ENCODE measurements at regions of chr15 and their contacts with region 1.

Region 1: GRCh38 chr15:64355944-64356709 is at the start of gene CSNK1G1:
- DNase-seq: peak; percentile 88
- H3K4me3 Mint-ChIP-seq: peak within 1 kb of the TSS; percentile 95
- H3K27ac Mint-ChIP-seq: peak within 1 kb of the TSS; percentile 95
- H3K4me1 Mint-ChIP-seq: peaks cover 21% of the 10 kb centered on the region
- H3K27me3 Mint-ChIP-seq: no peaks in the 10 kb centered on the region
- total RNA-seq, gene CSNK1G1: 31.8 and 34.8 TPM in 2 replicates

Region 2: DNA sequence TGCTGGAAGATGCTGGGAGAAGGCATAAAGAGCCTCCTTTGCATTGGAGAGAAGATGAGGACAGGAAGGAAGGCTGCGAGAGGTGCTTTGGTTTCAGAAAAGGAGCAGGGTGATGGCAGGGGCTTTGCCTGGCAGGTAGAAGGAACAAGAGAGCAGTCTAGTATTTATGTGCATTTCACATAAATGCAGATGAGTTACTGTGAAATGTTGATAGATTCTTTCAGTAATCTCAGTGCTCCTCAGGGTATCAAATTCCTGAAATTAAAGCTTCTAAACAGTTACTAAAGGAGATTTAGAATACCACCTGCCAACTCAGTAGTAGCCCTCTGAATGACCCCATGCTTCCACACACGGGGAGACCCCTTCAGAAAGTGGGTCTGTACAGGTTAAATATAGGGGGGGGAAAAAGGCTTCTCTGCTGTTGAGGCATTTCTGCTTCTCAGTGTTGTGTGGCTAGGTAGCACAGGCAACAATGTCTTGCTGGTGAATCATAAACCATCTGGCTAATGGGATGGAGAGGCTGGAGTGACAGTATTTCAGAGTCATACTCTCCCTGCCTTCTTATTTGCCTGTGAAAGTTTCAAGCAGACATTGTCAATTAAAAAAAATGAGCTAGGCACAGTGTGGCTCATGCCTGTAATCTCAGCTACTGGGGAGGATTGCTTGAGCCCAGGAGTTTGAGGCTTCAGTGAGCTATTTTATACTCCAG is 773.3 kb before region 1 on chr15:
- intact Hi-C with region 1: no loop called
- DNase-seq: no peak
- H3K4me3 Mint-ChIP-seq: no peak overlapping the region
- H3K27ac Mint-ChIP-seq: peak overlapping the region; percentile 38
- H3K4me1 Mint-ChIP-seq: peaks cover 3% of the 10 kb centered on the region
- H3K27me3 Mint-ChIP-seq: no peaks in the 10 kb centered on the region

Region 3: DNA sequence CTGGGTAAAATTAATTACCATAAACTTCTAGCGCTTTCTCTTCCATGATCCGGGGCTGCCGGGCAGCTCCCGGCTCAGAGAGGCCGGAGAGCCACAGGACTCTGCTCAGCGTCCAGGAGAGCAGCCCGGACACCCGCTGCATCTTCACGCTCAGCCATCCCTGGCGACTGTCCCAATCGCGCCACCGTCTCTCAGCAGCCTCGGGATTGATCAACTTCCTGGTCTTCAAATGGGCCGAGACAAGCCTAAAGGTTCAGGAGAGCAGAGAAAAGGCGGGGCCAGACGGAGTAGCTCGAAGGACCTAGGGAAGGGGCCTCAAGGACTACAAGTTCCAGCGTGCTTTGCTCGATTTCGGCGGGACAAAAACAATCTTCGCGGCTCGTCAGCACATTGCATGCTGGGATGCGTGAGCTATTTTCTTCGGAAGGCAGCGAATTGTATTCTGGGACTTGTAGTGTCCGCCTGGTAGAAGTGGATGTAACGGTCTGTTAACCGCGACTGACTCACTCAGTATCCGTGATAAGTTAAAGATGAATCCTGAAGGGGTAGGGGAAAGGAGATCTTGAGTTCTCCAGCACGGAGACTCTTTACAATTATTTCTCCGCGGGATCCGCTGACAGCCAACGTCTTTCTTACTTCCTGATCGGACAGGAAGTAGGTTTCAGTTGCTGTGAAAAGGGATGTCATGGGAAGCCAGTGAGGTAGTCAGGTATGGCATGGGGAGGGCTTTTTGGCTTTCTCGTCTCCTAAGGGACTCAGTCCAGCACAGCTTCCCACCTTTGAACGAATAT is 262.3 kb before region 1 on chr15 and contains the start of gene CIAO2A:
- intact Hi-C with region 1: loop called (anchors 10 kb)
- DNase-seq: peak; percentile 93
- H3K4me3 Mint-ChIP-seq: peak within 1 kb of the TSS; percentile 94
- H3K27ac Mint-ChIP-seq: peak within 1 kb of the TSS; percentile 92
- H3K4me1 Mint-ChIP-seq: peaks cover 50% of the 10 kb centered on the region
- H3K27me3 Mint-ChIP-seq: no peaks in the 10 kb centered on the region
- total RNA-seq, gene CIAO2A: 76.1 and 78.3 TPM in 2 replicates

Region 4: GRCh38 chr15:64162870-64163658 is 193.1 kb before region 1 on chr15 and contains the start of gene PPIB:
- intact Hi-C with region 1: loop called (anchors 5 kb)
- DNase-seq: peak; percentile 98
- H3K4me3 Mint-ChIP-seq: peak within 1 kb of the TSS; percentile 89
- H3K27ac Mint-ChIP-seq: peak within 1 kb of the TSS; percentile 97
- H3K4me1 Mint-ChIP-seq: peaks cover 40% of the 10 kb centered on the region
- H3K27me3 Mint-ChIP-seq: no peaks in the 10 kb centered on the region
- total RNA-seq, gene PPIB: 457 and 465 TPM in 2 replicates

Region 5: DNA sequence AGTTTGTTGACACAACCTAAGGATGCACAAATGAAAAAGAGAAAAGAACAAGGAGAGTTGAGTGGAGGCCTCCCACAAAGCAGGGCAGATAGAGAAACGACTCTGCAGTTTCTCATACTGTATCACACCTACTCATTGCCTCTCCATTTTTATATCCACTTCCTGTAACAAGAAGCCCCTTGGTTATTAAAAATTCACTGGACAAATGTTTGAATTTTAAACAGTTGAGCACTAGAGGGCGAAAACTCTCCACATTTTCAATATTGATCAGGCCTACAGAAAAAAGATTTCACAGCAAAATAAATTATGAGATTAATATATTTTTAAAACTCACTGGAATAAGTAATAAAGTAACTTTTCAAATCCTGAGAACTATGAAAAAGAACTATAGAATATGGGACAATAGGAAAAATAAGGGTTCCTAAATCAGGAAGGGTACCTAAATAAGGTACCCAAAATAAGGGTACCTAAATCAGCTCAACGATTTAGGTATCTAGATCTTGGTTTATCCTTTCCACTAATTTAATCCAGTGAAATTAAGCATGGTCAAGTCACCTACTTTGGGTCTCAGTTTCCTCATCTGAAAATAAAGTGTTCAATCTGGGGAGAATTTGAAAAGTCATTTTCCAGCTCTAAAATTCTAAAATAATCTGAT is 146.3 kb before region 1 on chr15:
- intact Hi-C with region 1: loop called (anchors 5 kb)
- DNase-seq: no peak
- H3K4me3 Mint-ChIP-seq: no peak overlapping the region
- H3K27ac Mint-ChIP-seq: no peak overlapping the region
- H3K4me1 Mint-ChIP-seq: peaks cover 30% of the 10 kb centered on the region
- H3K27me3 Mint-ChIP-seq: no peaks in the 10 kb centered on the region

Region 6: GRCh38 chr15:64381000-64381752 is 25.0 kb after region 1 on chr15 and contains the start of gene PCLAF:
- intact Hi-C with region 1: loop called (anchors 1 kb)
- DNase-seq: peak; percentile 93
- H3K4me3 Mint-ChIP-seq: peak within 1 kb of the TSS; percentile 89
- H3K27ac Mint-ChIP-seq: peak within 1 kb of the TSS; percentile 85
- H3K4me1 Mint-ChIP-seq: peaks cover 16% of the 10 kb centered on the region
- H3K27me3 Mint-ChIP-seq: no peaks in the 10 kb centered on the region
- total RNA-seq, gene PCLAF: 59.9 and 72.3 TPM in 2 replicates

Region 7: GRCh38 chr15:64387562-64388168 is 31.5 kb after region 1 on chr15 and contains the start of gene TRIP4:
- intact Hi-C with region 1: loop called (anchors 1 kb)
- DNase-seq: peak; percentile 96
- H3K4me3 Mint-ChIP-seq: peak within 1 kb of the TSS; percentile 100
- H3K27ac Mint-ChIP-seq: peak within 1 kb of the TSS; percentile 93
- H3K4me1 Mint-ChIP-seq: peaks cover 14% of the 10 kb centered on the region
- H3K27me3 Mint-ChIP-seq: no peaks in the 10 kb centered on the region
- total RNA-seq, gene TRIP4: 17.9 and 20.7 TPM in 2 replicates

Measured in activated T-helper 2 cell treated with anti-CD3 and anti-CD28 coated beads, Interferon-gamma antibody, Interleukin-2, Interleukin-4, amounts not matched to agents 10 μg/mL and 5 μg/mL and 100 μg/mL, durations not matched to agents 14 hours and 24 hours and 36 hours (primary cell).